Heart right ventricle (tissue), 16 donors: ENCODE measurements at regions of chr1 and their contacts with region 1.

Region 1: DNA sequence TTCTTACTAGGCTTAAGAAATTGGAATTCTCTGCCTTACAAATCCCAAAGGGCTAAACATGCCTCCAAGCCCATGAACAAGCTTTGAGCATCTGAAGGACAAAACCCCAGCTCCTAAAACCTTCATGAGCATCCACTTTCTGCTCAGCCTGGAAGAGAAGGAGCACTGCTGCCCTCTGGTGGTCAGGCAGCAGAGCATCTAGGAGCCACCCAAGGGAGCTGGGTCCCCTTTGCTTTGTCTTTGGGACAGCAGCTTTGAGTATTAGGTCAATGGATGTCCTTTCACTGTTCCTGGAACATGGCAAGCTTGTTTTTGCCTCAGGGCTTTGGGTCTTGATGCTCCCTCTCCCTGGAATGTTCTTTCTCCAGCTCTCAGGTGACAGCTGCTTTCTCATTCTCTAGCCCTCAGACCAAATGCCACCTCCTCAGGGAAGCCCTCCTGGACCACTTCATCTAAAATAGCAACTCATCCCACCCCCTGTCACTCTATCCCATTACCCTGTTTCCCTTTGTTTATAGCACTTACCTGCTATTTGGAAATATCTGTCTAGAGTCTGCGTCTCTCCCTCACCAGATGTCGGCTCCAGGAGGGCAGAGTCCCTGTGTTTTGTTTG is 25.7 kb downstream of the RAB7B start:
- DNase-seq: peak; percentile 71 to 81
- ATAC-seq: peak; percentile 69 to 90 (median 82)
- H3K4me3 ChIP-seq: no peak overlapping the region
- H3K27ac ChIP-seq: peak overlapping the region in 9 of 10 donors; percentile 49 to 91 (median 79)
- H3K4me1 ChIP-seq: peaks cover 5 to 22% (median 20%) of the 10 kb centered on the region in 9 donors
- H3K27me3 ChIP-seq: no peaks in the 10 kb centered on the region
- CTCF ChIP-seq: peak; percentile 89 to 97 (median 96)

Region 2: DNA sequence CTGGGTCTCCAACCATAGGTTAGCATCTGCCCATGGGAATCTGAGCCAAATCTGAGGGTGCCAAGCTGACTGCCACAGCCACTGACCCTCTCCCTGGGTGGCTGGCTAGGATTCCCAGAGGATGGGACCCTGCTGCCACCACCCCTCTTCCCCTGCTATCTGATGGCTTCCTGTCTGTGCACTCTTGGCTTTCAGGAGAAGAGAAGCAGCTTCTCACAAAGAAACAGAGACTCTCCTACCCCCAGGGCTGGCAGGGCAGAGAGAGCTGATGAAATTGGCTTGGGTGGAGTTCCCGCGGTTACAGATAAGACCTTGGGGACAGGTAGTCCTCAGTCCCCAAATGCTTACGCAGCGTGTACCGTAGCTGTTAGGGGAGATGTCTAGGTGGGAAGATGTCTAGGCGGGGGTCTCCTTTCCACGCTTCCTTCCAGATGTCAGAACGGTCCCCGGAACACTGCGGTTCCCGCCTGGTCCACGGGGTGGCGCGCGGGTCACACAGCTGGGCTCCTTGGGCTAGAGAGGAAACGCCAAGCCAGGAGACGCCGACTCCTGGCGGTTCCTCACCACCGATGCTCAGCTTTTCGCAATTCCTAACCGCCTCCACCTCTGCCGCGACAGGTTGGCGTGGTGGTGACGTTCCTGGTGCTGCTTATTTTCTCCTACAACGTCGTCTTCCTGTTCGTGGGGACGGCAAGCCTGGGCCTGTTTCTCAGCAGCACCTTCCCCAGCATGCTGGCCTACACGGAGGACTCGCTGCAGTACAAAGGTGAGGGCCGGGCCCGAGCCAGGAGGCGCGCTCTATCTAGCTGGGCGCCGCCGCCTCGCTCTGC is 385.8 kb before region 1 on chr1:
- intact Hi-C with region 1: loop called in 1 of 10 experiments (anchors 5 kb)
- DNase-seq: peak; percentile 86 to 88
- ATAC-seq: peak; percentile 86 to 96 (median 93)
- H3K4me3 ChIP-seq: peak overlapping the region in 9 of 10 donors; percentile 31 to 60 (median 46)
- H3K27ac ChIP-seq: peak overlapping the region in 5 of 10 donors; percentile 9 to 51 (median 36)
- H3K4me1 ChIP-seq: peaks cover 0 to 36% (median 17%) of the 10 kb centered on the region in 9 donors
- H3K27me3 ChIP-seq: no peaks in the 10 kb centered on the region
- CTCF ChIP-seq: peak; percentile 98 to 99 (median 99)

Region 3: GRCh38 chr1:205668951-205669340 is 308.6 kb before region 1 on chr1:
- intact Hi-C with region 1: loop called in 1 of 10 experiments (anchors 10 kb)
- DNase-seq: no peak
- ATAC-seq: no peak
- H3K4me3 ChIP-seq: no peak overlapping the region
- H3K27ac ChIP-seq: no peak overlapping the region
- H3K4me1 ChIP-seq: peaks cover 0 to 36% (median 12%) of the 10 kb centered on the region in 9 donors
- H3K27me3 ChIP-seq: peaks cover 0 to 3% (median 0%) of the 10 kb centered on the region in 7 donors
- CTCF ChIP-seq: no peak

Region 4: DNA sequence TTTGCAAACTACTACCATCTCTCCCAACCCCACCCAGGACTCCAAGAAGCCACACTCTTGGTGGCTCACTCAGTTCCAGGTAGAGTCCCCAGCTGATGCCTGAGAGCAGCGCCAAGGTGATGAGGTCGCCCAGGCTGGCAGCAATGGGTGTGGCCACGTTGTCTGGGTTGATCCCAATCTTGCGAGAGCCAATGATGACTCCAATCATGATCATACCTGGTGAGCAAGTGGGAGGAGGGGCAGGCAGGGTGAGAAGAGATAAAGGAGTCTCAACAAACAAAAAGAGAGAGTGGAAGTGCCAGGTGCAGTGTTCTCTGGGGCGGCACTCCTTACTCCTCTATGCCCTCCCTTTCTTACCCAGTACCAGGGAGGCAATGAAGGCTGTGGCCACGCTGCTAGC is 178.9 kb before region 1 on chr1:
- intact Hi-C with region 1: loop called in 7 of 10 experiments (anchors 2 to 5 kb)
- DNase-seq: no peak
- ATAC-seq: no peak
- H3K4me3 ChIP-seq: no peak overlapping the region
- H3K27ac ChIP-seq: no peak overlapping the region
- H3K4me1 ChIP-seq: peaks cover 3 to 69% (median 26%) of the 10 kb centered on the region in 9 donors
- H3K27me3 ChIP-seq: no peaks in the 10 kb centered on the region
- CTCF ChIP-seq: no peak

Region 5: GRCh38 chr1:205919026-205919746 is 58.3 kb before region 1 on chr1:
- intact Hi-C with region 1: loop called (anchors 1 to 2 kb)
- DNase-seq: peak; percentile 71 to 88
- ATAC-seq: peak; percentile 35 to 77 (median 66)
- H3K4me3 ChIP-seq: peak overlapping the region in 5 of 10 donors; percentile 2 to 26 (median 9)
- H3K27ac ChIP-seq: peak overlapping the region; percentile 67 to 90 (median 82)
- H3K4me1 ChIP-seq: peaks cover 4 to 67% (median 35%) of the 10 kb centered on the region in 9 donors
- H3K27me3 ChIP-seq: no peaks in the 10 kb centered on the region
- CTCF ChIP-seq: peak; percentile 81 to 95 (median 90)